ENCODE measurements at regions of chr15 and their contacts with region 1.

Region 1: GRCh38 chr15:90886041-90886614 is 1.8 kb downstream of the FES start:
- DNase-seq: peak; percentile 88
- H3K4me3 Mint-ChIP-seq: no peak overlapping the region
- H3K27ac Mint-ChIP-seq: peak overlapping the region; percentile 13
- H3K4me1 Mint-ChIP-seq: peaks cover 26% of the 10 kb centered on the region
- H3K27me3 Mint-ChIP-seq: peaks cover 3% of the 10 kb centered on the region

Region 2: DNA sequence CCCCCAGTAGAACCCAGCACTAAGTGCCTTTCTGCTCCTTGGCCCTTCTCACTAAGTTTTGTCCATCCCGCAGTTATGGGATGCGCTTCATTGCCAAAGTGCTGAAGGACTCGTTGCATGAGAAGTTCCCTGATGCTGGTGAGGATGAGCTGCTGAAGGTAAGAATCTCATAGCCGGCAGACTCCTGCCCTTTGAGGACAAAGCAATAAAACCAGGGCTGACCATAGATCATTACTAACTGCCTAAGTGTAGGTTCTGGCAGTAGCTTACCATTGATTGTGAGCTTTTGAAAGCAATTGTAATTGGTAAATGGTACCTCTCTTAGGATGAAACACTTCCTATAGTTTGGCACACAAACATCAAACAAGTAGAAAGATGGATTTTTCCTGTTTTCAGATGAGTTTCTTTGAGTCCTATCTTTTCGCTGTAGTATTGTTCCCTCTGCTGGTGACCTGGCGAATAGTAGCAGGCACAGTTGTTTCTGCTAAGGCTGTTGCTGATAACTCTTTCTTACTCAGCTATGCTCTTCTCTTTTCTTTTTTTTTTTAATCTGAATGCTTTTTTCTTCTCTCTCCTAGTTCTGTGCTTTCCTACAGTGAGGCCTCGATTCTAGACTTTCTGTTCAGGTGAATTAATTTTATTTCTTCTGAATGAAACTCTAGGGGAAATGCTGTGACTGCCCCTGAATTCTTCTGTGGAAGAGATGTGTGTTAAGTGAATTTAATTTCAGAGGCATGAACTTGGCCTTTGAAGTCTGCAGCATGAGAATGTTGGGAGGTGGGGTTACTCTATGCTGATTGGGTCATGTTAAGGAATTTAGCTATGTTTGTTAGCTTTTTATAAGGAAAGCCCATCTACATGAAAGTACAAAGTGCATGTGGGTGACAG is 403.8 kb before region 1 on chr15:
- CTCF ChIA-PET with region 1: interaction called, 12 read pairs
- intact Hi-C with region 1: no loop called
- DNase-seq: peak; percentile 74
- H3K4me3 Mint-ChIP-seq: no peak overlapping the region
- H3K27ac Mint-ChIP-seq: no peak overlapping the region
- H3K4me1 Mint-ChIP-seq: peaks cover 16% of the 10 kb centered on the region
- H3K27me3 Mint-ChIP-seq: no peaks in the 10 kb centered on the region

Region 3: GRCh38 chr15:90691982-90692773 is 193.9 kb before region 1 on chr15:
- CTCF ChIA-PET with region 1: interaction called, 3 read pairs
- intact Hi-C with region 1: loop called (anchors 5 kb)
- DNase-seq: no peak
- H3K4me3 Mint-ChIP-seq: no peak overlapping the region
- H3K27ac Mint-ChIP-seq: no peak overlapping the region
- H3K4me1 Mint-ChIP-seq: peaks cover 4% of the 10 kb centered on the region
- H3K27me3 Mint-ChIP-seq: no peaks in the 10 kb centered on the region

Region 4: DNA sequence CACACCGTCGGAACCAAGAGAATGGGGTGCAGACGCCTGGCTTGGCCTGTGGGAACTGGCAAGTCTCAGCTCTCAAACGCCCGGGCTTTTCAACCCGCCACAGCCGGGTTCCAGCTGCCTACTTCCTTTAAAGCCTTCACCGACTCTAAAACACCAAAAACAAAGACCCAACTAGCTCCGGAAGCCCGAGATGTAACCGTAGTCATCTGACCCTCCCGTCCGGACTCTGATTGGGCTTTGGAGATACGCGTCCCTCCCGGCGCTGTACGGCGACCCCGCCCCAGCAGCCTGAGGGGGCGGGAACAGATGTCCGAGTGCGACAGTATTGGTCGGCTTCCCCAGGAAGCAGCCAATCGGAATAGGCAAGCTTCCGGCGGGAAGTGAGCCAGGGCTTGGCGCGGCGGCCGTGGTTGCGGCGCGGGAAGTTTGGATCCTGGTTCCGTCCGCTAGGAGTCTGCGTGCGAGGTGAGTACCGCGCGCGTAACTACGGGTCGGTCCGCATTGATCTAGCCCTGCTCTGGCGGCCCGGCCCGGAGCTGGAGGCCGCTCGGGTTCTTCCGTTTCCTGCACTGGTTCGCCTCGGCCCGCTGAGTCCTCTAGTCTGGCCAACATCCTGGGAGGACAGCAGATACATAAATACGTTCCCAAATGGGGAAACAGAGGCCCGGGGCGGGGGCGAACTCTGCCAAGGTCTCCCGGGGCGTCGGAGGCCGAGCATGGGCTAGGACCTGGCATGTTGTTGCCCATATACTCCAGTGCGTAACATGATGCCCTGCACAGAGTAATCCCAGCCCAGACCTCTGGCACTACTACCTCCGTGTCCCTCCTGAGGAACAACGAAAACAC is 168.9 kb before region 1 on chr15 and contains the start of gene BLM:
- CTCF ChIA-PET with region 1: interaction called, 12 read pairs
- intact Hi-C with region 1: no loop called
- DNase-seq: peak; percentile 97
- H3K4me3 Mint-ChIP-seq: peak within 1 kb of the TSS; percentile 87
- H3K27ac Mint-ChIP-seq: peak within 1 kb of the TSS; percentile 90
- H3K4me1 Mint-ChIP-seq: peaks cover 24% of the 10 kb centered on the region
- H3K27me3 Mint-ChIP-seq: no peaks in the 10 kb centered on the region
- total RNA-seq, gene BLM: 62.9 to 70.4 TPM

Region 5: GRCh38 chr15:90808517-90809235 is 77.5 kb before region 1 on chr15:
- CTCF ChIA-PET with region 1: interaction called, 17 read pairs
- intact Hi-C with region 1: no loop called
- DNase-seq: no peak
- H3K4me3 Mint-ChIP-seq: no peak overlapping the region
- H3K27ac Mint-ChIP-seq: no peak overlapping the region
- H3K4me1 Mint-ChIP-seq: peaks cover 12% of the 10 kb centered on the region
- H3K27me3 Mint-ChIP-seq: no peaks in the 10 kb centered on the region

Region 6: GRCh38 chr15:90829942-90830440 is 56.1 kb before region 1 on chr15:
- CTCF ChIA-PET with region 1: interaction called, 16 read pairs
- intact Hi-C with region 1: no loop called
- DNase-seq: peak; percentile 94
- H3K4me3 Mint-ChIP-seq: peak overlapping the region; percentile 62
- H3K27ac Mint-ChIP-seq: peak overlapping the region; percentile 100
- H3K4me1 Mint-ChIP-seq: peaks cover 54% of the 10 kb centered on the region
- H3K27me3 Mint-ChIP-seq: no peaks in the 10 kb centered on the region

Region 7: GRCh38 chr15:90902040-90902839 is 16.1 kb after region 1 on chr15:
- CTCF ChIA-PET with region 1: interaction called, 12 read pairs
- intact Hi-C with region 1: no loop called
- DNase-seq: peak; percentile 84
- H3K4me3 Mint-ChIP-seq: peak overlapping the region; percentile 86
- H3K27ac Mint-ChIP-seq: peak overlapping the region; percentile 88
- H3K4me1 Mint-ChIP-seq: peaks cover 27% of the 10 kb centered on the region
- H3K27me3 Mint-ChIP-seq: no peaks in the 10 kb centered on the region

Region 8: GRCh38 chr15:91165850-91166249 is 279.7 kb after region 1 on chr15:
- CTCF ChIA-PET with region 1: no interaction called
- intact Hi-C with region 1: no loop called
- DNase-seq: no peak
- H3K4me3 Mint-ChIP-seq: no peak overlapping the region
- H3K27ac Mint-ChIP-seq: no peak overlapping the region
- H3K4me1 Mint-ChIP-seq: no peaks in the 10 kb centered on the region
- H3K27me3 Mint-ChIP-seq: peaks cover 11% of the 10 kb centered on the region

Measured in activated naive CD4-positive, alpha-beta T cell treated with anti-CD3 and anti-CD28 coated beads for 36 hours (primary cell).